Colonic mucosa (tissue), 4 donors: ENCODE measurements at regions of chrX and their contacts with region 1.

Region 1: DNA sequence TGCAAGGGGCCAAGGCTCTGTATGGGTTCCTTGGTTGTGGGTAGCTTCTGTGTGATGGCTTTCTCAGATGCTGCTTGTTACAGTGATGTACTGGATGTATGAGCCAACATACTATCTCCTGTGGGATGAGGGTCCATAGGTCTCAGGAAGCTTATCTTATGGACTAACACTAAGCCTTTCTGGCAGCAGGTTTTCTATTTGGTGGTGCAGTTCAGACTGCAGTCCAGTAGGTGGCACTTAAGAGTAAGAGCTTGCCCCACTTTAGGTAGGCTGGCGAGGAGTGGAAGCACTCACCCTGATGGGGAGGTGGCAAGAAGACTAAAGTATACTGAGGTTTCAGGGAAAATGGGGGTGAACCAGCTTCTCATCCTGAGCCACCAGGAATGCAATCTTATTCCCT is 306.7 kb upstream of the MAOA start:
- DNase-seq: peak; percentile 56
- H3K4me3 ChIP-seq: no peak overlapping the region
- H3K27ac ChIP-seq: no peak overlapping the region
- H3K4me1 ChIP-seq: no peaks in the 10 kb centered on the region
- H3K27me3 ChIP-seq: no peaks in the 10 kb centered on the region
- CTCF ChIP-seq: peak; percentile 82

Region 2: DNA sequence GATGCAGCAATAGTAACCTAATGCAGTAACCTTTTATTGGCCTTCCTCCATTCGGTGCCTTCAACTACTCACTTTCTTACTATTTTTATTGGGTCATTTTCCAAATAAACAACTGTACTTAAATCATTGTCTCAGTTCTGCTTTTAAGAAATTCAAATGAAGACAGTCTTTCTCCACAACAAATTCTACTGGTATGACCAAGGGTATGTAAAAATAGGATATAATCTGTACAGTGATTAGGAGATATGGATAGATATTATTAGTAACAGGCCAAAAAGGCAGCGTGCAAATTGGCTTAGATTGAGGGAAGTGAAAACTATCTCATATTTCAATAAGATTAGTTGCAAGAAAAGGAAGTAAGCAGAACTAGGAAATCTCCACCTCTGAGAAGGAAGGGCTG is 394.0 kb before region 1 on chrX:
- intact Hi-C with region 1: no loop called
- DNase-seq: no peak
- H3K4me3 ChIP-seq: no peak overlapping the region
- H3K27ac ChIP-seq: no peak overlapping the region
- H3K4me1 ChIP-seq: no peaks in the 10 kb centered on the region
- H3K27me3 ChIP-seq: no peaks in the 10 kb centered on the region
- CTCF ChIP-seq: no peak

Region 3: GRCh38 chrX:43750248-43750676 is 400.9 kb after region 1 on chrX:
- intact Hi-C with region 1: loop called (anchors 10 kb)
- DNase-seq: peak; percentile 58
- H3K4me3 ChIP-seq: no peak overlapping the region
- H3K27ac ChIP-seq: no peak overlapping the region
- H3K4me1 ChIP-seq: no peaks in the 10 kb centered on the region
- H3K27me3 ChIP-seq: no peaks in the 10 kb centered on the region
- CTCF ChIP-seq: peak; percentile 62